ENCODE measurements at regions of chr2 and their contacts with region 1.

Region 1: GRCh38 chr2:85852937-85853498 is 35.8 kb downstream of the ST3GAL5 start:
- DNase-seq: peak; percentile 80
- H3K4me3 Mint-ChIP-seq: peak overlapping the region; percentile 84
- H3K27ac Mint-ChIP-seq: peak overlapping the region; percentile 100
- H3K4me1 Mint-ChIP-seq: peaks cover 70% of the 10 kb centered on the region
- H3K27me3 Mint-ChIP-seq: no peaks in the 10 kb centered on the region

Region 2: DNA sequence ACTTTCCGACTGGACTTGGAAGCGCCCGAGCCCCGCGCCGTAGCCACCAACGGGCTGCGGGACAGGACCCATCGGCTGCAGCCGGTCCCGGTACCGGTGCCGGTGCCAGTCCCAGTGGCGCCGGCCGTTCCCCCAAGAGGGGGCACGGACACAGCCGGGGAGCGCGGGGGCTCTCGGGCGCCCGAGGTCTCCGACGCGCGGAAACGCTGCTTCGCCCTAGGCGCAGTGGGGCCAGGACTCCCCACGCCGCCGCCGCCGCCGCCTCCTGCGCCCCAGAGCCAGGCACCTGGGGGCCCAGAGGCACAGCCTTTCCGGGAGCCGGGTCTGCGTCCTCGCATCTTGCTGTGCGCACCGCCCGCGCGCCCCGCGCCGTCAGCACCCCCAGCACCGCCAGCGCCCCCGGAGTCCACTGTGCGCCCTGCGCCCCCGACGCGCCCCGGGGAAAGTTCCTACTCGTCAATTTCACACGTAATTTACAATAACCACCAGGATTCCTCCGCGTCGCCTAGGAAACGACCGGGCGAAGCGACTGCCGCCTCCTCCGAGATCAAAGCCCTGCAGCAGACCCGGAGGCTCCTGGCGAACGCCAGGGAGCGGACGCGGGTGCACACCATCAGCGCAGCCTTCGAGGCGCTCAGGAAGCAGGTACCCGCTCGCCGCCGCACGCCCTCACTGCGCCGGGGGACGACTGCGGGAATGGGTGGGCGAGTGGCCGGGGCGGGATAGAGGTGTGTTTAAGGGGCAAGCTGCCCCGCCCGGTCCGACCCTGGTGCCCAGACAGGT is 98.5 kb before region 1 on chr2:
- CTCF ChIA-PET with region 1: no interaction called
- POLR2A ChIA-PET with region 1: no interaction called
- DNase-seq: peak; percentile 36
- H3K4me3 Mint-ChIP-seq: peak overlapping the region; percentile 74
- H3K27ac Mint-ChIP-seq: no peak overlapping the region
- H3K4me1 Mint-ChIP-seq: peaks cover 20% of the 10 kb centered on the region
- H3K27me3 Mint-ChIP-seq: peaks cover 74% of the 10 kb centered on the region

Region 3: DNA sequence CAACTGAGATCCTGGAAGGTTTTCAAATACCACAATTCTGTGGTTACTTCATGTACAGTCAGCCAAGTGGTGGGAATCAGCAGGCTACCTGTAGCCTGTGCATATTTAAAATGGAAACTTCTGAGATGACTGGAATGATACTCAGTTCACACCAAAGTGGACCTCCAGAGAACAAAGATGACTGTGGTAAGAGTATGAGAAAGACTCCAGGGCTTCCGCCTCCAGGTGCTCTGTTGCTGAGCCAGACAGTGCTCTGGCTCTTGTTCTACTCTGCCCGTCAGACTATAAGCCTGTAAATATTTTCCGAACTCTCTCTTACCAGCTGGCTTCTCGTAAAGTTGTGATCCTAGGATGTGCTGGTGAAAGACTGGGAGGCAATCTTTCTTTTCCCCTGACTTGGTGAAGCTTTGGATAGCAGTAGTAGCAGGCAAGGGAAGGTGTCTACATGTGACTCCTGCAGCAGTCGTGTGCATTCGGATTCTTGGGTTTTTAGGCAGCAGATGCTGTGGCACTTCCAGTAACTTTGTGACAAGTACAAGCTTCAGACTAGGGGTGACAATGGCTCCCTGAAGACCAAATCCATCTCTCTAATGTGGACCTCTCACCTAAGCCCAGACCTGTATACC is 12.6 kb after region 1 on chr2:
- CTCF ChIA-PET with region 1: no interaction called
- POLR2A ChIA-PET with region 1: interaction called, 70 read pairs
- DNase-seq: no peak
- H3K4me3 Mint-ChIP-seq: no peak overlapping the region
- H3K27ac Mint-ChIP-seq: no peak overlapping the region
- H3K4me1 Mint-ChIP-seq: peaks cover 64% of the 10 kb centered on the region
- H3K27me3 Mint-ChIP-seq: no peaks in the 10 kb centered on the region

Measured in activated CD4-positive, alpha-beta memory T cell treated with anti-CD3 and anti-CD28 coated beads, Interleukin-2, amount 10 ng/mL, durations not matched to agents 7 days and 5 days (primary cell).